ENCODE measurements at regions of chr9 and their contacts with region 1.

Region 1: DNA sequence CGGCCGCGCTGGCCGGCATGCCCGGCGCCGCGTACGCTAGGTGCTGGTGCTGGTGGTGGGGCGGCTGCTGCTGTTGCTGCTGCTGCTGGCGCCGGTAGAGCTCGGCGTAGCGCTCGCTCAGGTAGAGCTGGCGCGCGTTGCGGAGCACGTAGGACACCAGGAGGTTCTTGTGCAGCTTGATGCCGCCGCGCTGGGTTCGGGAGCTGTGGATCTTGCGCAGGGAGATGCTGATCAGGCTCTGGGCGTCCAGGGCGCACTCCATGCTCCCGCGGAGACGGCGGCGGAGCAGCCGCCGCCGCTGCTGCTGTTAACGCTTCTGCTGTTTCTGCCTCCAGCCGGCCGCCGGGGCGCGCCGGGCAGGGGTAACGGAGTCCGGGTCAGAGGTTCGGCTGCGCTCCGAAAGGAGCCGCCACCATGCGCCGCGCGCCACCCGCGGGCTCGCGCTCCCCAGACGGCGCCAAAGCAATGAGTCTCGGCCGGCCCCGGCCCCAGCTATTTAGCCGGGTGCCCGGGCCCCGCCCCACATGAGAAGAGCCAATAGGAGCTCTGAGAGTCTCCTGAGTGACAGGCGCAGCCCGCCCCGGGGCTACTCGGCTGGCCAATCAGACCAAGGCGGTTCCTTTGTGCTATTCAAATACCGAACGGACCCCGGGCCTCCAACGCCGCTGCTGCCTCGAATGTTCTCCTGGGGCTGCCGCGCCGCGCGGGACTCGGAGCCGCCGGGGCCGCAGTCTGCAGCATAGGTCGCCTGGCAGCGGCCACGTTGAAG is at the start of gene IER5L:
- DNase-seq: peak; percentile 80 to 97
- H3K4me3 ChIP-seq: peak within 1 kb of the TSS; percentile 38 to 71 (median 52)
- H3K27ac ChIP-seq: no peak within 1 kb of the TSS
- H3K4me1 ChIP-seq: peaks cover 0 to 24% (median 13%) of the 10 kb centered on the region in 4 experiments; a peak in 6 of 7 replicates
- H3K27me3 ChIP-seq: peaks cover 49 to 80% (median 72%) of the 10 kb centered on the region in 4 experiments
- CTCF ChIP-seq: no peak
- EP300 ChIP-seq: no peak
- POLR2A ChIP-seq: peak in 1 of 2 experiments; percentile 96; a peak in 2 of 3 replicates
- RAD21 ChIP-seq: no peak; a peak in 1 of 4 replicates
- total RNA-seq, gene IER5L: 1.0 and 1.2 TPM in 2 replicates

Region 2: DNA sequence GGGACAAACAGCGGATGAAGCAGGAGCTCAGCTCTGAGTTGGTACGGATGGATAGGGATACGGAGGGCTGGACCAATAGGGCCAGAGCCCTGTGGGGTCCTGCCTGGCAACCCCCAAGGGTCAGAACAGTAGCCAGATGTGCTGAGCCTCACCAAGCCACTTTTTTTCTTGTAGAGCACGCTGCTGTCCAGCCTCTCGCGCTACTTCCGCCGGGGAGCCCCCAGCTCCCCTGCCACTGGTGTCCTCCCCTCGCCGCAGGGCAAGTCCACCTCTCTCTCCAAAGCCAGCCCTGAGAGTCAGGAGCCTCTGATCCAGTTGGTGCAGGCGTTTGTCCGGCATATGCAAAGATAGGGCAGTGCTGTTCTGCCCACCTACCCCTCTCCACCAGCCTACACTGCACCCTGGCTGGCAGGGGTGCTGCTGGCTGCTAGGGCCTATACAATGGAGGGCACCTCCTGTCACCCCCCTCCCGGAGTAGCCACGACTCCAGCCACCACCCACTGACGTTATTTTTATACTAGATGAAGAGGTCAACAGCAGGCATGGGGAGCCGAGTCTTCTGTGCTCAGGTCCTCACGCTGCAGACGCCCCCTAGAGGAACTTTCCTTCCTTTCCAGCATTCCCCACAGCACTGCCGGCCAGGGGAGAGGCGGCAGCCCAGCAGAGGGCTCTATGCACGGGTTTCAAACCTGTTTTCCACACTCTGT is 171.5 kb before region 1 on chr9:
- CTCF ChIA-PET with region 1: no interaction called
- POLR2A ChIA-PET with region 1: no interaction called
- DNase-seq: peak; percentile 64 to 74
- H3K4me3 ChIP-seq: no peak overlapping the region
- H3K27ac ChIP-seq: no peak overlapping the region
- H3K4me1 ChIP-seq: no peaks in the 10 kb centered on the region
- H3K27me3 ChIP-seq: no peaks in the 10 kb centered on the region
- CTCF ChIP-seq: peak in 2 of 3 experiments; percentile 96 to 98; a peak in 3 of 4 replicates
- EP300 ChIP-seq: no peak
- POLR2A ChIP-seq: peak in 1 of 2 experiments; percentile 32; a peak in 1 of 3 replicates
- RAD21 ChIP-seq: peak; percentile 54 to 61

Region 3: GRCh38 chr9:129139993-129140396 is 38.0 kb before region 1 on chr9:
- CTCF ChIA-PET with region 1: interaction called, 831 read pairs
- POLR2A ChIA-PET with region 1: interaction called, 28 read pairs
- DNase-seq: peak in 1 of 2 experiments; percentile 93
- H3K4me3 ChIP-seq: peak overlapping the region; percentile 29 to 55 (median 38); a peak in 7 of 8 replicates
- H3K27ac ChIP-seq: peak overlapping the region; percentile 96
- H3K4me1 ChIP-seq: peaks cover 28 to 46% (median 38%) of the 10 kb centered on the region in 4 experiments
- H3K27me3 ChIP-seq: no peaks in the 10 kb centered on the region
- CTCF ChIP-seq: no peak
- EP300 ChIP-seq: peak in 1 of 2 experiments; percentile 92; a peak in 2 of 3 replicates
- POLR2A ChIP-seq: peak in 1 of 2 experiments; percentile 83; a peak in 2 of 3 replicates
- RAD21 ChIP-seq: peak; percentile 1 to 20; a peak in 2 of 4 replicates

Region 4: DNA sequence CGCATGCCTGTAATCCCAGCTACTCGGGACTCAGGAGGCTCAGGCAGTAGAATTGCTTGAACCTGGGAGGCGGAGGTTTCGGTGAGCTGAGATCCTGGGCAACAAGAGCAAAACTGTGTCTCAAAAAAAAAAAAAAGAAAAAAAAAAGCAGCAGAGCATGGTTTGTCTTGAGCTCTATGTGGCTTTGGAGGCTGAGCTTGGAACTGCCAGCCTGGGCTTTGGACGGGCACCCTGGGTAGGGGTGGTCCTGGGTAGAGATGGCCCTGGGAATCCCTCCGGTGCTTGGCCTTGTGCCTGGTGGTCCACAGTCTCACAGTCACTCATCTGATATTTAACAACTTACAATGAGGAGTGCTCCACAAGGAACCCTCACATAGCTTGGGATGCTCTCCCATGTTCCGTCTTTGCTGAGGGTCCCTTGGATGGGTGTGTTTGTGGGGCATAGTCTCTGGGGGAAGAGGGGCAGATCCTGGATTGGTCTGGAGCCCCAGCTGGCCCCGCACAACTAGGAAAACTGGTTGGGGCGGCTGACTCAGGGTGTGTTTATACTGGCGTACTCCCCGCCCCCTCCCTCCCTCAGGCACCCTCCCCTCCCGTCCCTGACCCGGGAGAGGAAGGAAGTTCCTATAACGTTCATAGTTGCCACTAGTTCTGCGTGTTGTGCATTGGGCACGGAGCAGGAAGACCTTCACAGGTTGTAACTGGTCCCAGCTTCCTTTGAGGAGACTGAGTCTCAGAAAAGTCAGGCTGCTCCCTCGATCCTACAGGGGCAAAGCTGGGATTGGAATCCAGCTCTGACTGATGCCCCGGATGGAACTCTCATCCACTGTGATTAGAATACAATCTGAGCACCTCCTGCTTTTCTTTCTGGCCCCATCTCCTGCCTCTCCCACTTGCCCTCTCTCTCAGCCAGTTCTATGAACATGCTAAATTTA is 11.1 kb before region 1 on chr9:
- CTCF ChIA-PET with region 1: interaction called, 831 read pairs
- POLR2A ChIA-PET with region 1: interaction called, 30 read pairs
- DNase-seq: no peak
- H3K4me3 ChIP-seq: peak overlapping the region in 3 of 4 experiments; percentile 13 to 47 (median 15); a peak in 5 of 8 replicates
- H3K27ac ChIP-seq: 0 out of 2 replicates have a peak overlapping the region, but pooled peaks have one; percentile 50
- H3K4me1 ChIP-seq: peaks cover 8 to 20% (median 15%) of the 10 kb centered on the region in 4 experiments
- H3K27me3 ChIP-seq: peaks cover 0 to 1% (median under 1%) of the 10 kb centered on the region in 4 experiments; a peak in 2 of 7 replicates
- CTCF ChIP-seq: no peak
- EP300 ChIP-seq: no peak
- POLR2A ChIP-seq: peak in 1 of 2 experiments; percentile 35; a peak in 1 of 3 replicates
- RAD21 ChIP-seq: no peak

Region 5: DNA sequence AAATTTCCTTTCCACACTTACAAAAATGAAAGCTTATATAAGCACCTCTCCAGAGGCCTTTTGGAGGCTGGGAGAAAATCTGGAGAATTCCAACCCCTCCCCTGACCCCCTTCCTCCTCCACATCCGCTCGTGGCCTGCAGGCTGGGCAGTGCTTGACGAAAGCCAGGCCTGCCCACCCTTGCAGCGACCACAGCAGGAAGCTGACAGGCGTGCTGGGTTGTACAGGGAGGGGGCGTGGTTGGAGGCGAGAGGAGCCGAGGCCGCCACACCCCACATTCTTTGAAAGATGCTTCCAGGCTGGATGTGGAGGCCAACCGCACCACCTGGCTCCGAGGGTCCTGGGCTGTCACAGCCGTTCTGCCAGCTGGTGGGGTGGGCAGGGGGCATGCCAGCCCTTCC is 47.8 kb after region 1 on chr9:
- CTCF ChIA-PET with region 1: interaction called, 16 read pairs
- POLR2A ChIA-PET with region 1: interaction called, 5 read pairs
- DNase-seq: no peak
- H3K4me3 ChIP-seq: no peak overlapping the region
- H3K27ac ChIP-seq: no peak overlapping the region
- H3K4me1 ChIP-seq: peaks cover 0 to 24% (median 13%) of the 10 kb centered on the region in 4 experiments; a peak in 6 of 7 replicates
- H3K27me3 ChIP-seq: no peaks in the 10 kb centered on the region
- CTCF ChIP-seq: no peak
- EP300 ChIP-seq: no peak
- POLR2A ChIP-seq: no peak
- RAD21 ChIP-seq: peak in 1 of 2 experiments; percentile 6; a peak in 1 of 4 replicates

Region 6: GRCh38 chr9:129352146-129352865 is 174.3 kb after region 1 on chr9:
- CTCF ChIA-PET with region 1: interaction called, 9 read pairs
- POLR2A ChIA-PET with region 1: interaction called, 11 read pairs
- DNase-seq: peak; percentile 61 to 93
- H3K4me3 ChIP-seq: peak overlapping the region; percentile 47 to 82 (median 56)
- H3K27ac ChIP-seq: peak overlapping the region; percentile 21; the same call in 1 of the 2 replicates
- H3K4me1 ChIP-seq: peaks cover 0 to 19% (median 8%) of the 10 kb centered on the region in 4 experiments; a peak in 4 of 7 replicates
- H3K27me3 ChIP-seq: no peaks in the 10 kb centered on the region; a peak in 1 of 7 replicates
- CTCF ChIP-seq: no peak
- EP300 ChIP-seq: peak in 1 of 2 experiments; percentile 3; a peak in 1 of 3 replicates
- POLR2A ChIP-seq: no peak
- RAD21 ChIP-seq: no peak

Region 7: GRCh38 chr9:129610473-129611301 is 432.7 kb after region 1 on chr9:
- CTCF ChIA-PET with region 1: interaction called, 21 read pairs
- POLR2A ChIA-PET with region 1: interaction called, 10 read pairs
- DNase-seq: peak in 1 of 2 experiments; percentile 96
- H3K4me3 ChIP-seq: peak overlapping the region; percentile 29 to 91 (median 63)
- H3K27ac ChIP-seq: no peak overlapping the region
- H3K4me1 ChIP-seq: peaks cover 0 to 21% (median 10%) of the 10 kb centered on the region in 4 experiments; a peak in 6 of 7 replicates
- H3K27me3 ChIP-seq: peaks cover 0 to 7% (median 4%) of the 10 kb centered on the region in 4 experiments; a peak in 5 of 7 replicates
- CTCF ChIP-seq: peak in 2 of 3 experiments; percentile 89 to 96; a peak in 3 of 4 replicates
- EP300 ChIP-seq: no peak
- POLR2A ChIP-seq: no peak
- RAD21 ChIP-seq: peak; percentile 90 to 95